Heart left ventricle (tissue), 16 donors: ENCODE measurements at regions of chr11 and their contacts with region 1.

Region 1: GRCh38 chr11:112961146-112961668 is at the start of gene NCAM1:
- DNase-seq: peak; percentile 82 to 92 (median 88)
- ATAC-seq: peak; percentile 71 to 84 (median 75)
- H3K4me3 ChIP-seq: peak within 1 kb of the TSS; percentile 55 to 93 (median 68)
- H3K27ac ChIP-seq: peak within 1 kb of the TSS; percentile 52 to 90 (median 81)
- H3K4me1 ChIP-seq: peaks cover 0 to 39% (median 9%) of the 10 kb centered on the region in 12 donors
- H3K27me3 ChIP-seq: peaks cover 0 to 71% (median 8%) of the 10 kb centered on the region in 9 donors
- CTCF ChIP-seq: no peak
- POLR2A ChIP-seq: no peak
- total RNA-seq, gene NCAM1: 190 to 753 (median 398) TPM

Region 2: DNA sequence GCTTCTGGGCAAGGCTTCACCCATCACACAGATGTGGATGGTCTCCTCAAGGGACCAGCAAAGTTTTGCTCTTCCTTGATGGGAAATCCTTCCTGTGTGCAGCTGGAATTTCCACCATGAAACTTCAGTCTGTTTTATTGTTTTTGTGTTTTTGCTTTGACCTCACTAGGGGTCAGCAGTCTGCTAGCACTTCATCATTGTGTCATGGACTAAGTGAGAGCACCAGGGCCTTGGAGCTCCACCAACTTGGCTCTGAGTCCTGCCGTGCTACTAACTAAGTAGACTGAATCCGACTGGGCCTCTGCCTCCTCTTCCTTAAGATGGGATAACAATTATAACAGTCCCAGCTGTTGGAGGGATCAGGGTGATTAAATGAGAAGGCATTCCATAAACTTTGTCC is 305.8 kb before region 1 on chr11:
- intact Hi-C with region 1: loop called in 3 of 10 experiments (anchors 5 to 10 kb)
- DNase-seq: peak; percentile 81 to 91 (median 87)
- ATAC-seq: peak; percentile 50 to 84 (median 78)
- H3K4me3 ChIP-seq: no peak overlapping the region
- H3K27ac ChIP-seq: peak overlapping the region in 8 of 12 donors; percentile 4 to 65 (median 40)
- H3K4me1 ChIP-seq: peaks cover 0 to 51% (median 21%) of the 10 kb centered on the region in 12 donors
- H3K27me3 ChIP-seq: no peaks in the 10 kb centered on the region
- CTCF ChIP-seq: peak in 4 of 12 donors; percentile 24 to 42 (median 28)
- POLR2A ChIP-seq: no peak

Region 3: DNA sequence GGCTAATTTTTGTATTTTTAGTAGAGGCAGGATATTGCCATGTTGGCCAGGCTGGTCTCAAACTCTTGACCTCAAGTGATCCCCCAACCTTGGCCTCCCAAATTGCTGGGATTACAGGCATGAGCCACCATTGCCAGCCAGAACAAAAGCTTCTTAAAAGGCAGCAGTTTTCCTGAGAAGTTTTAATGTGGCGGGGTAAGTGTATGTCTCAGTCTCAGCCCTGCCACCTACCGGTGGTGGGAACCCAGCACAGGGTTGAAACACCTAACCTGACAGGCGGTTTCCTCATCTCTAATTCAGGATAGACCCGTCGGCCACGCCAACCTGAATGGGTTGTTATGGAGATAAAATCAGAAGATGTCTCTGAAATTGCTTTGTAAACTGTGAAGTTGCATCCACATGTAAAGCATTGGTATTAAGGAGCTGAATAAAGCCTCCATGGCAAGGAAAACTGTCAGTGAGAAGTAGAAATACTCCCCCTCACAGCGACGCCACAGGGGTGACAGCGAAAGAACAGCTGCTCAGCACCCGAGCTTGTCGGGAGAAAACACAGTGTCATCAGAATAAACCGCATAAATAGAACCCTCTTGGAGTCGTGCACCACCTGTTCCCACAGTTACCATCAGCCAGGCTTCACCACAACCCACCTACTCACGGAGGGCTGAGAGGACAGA is 165.9 kb before region 1 on chr11:
- intact Hi-C with region 1: loop called in 1 of 10 experiments (anchors 5 kb)
- DNase-seq: no peak
- ATAC-seq: peak in 2 of 4 donors; percentile 47 to 50
- H3K4me3 ChIP-seq: no peak overlapping the region
- H3K27ac ChIP-seq: peak overlapping the region in 4 of 12 donors; percentile 19 to 42 (median 29)
- H3K4me1 ChIP-seq: peaks cover 0 to 39% (median 14%) of the 10 kb centered on the region in 12 donors
- H3K27me3 ChIP-seq: no peaks in the 10 kb centered on the region
- CTCF ChIP-seq: peak; percentile 21 to 63 (median 47)
- POLR2A ChIP-seq: no peak

Region 4: DNA sequence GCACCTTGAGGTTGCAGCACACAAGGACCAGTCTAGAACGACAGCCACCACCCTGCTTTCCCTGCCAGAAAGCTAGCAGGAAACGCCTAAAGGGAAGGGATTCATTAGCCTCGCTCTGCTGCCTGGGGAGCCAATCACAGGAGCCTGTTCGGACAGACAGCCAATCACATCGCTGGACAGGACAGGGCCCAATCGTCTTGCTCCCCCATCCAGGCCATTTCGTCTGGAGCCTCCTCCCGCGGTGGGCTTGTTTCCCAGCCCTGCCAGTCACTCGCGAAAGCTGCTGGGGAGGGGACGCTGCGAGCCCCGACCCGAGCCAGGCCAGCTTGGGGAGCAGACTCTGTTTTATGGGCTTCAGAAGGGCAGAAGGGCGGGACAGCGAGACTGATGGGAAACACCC is 79.7 kb before region 1 on chr11:
- intact Hi-C with region 1: loop called in 1 of 10 experiments (anchors 5 kb)
- DNase-seq: peak; percentile 77 to 90 (median 83)
- ATAC-seq: peak; percentile 87 to 96 (median 92)
- H3K4me3 ChIP-seq: peak overlapping the region in 11 of 12 donors; percentile 16 to 63 (median 44)
- H3K27ac ChIP-seq: peak overlapping the region in 11 of 12 donors; percentile 35 to 86 (median 71)
- H3K4me1 ChIP-seq: peaks cover 0 to 33% (median 8%) of the 10 kb centered on the region in 12 donors
- H3K27me3 ChIP-seq: no peaks in the 10 kb centered on the region
- CTCF ChIP-seq: no peak
- POLR2A ChIP-seq: peak in 1 of 2 donors; percentile 64

Region 5: DNA sequence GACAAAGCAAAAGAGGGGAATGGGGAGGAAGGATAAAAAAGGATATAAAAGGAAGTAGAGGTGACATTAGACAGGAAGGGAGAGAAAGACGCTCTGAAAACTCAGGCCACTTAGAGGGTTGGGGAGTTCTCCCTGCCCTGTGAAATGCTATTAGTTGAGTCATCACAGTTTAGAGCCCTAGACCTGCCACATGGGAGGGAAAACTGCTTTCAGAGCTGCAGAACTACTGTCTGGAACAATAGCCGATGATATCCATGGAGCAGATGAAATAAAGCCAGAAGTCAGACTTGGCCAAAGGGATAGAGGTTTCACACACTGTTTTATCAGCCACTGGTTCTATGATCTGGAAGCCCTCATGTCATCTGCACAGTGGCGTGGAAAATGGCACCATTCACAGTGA is 157.9 kb after region 1 on chr11:
- intact Hi-C with region 1: loop called in 7 of 10 experiments (anchors 5 to 10 kb)
- DNase-seq: peak in 1 of 5 donors; percentile 18
- ATAC-seq: peak; percentile 62 to 87 (median 68)
- H3K4me3 ChIP-seq: no peak overlapping the region
- H3K27ac ChIP-seq: peak overlapping the region in 8 of 12 donors; percentile 24 to 63 (median 36)
- H3K4me1 ChIP-seq: peaks cover 0 to 54% (median 20%) of the 10 kb centered on the region in 12 donors
- H3K27me3 ChIP-seq: no peaks in the 10 kb centered on the region
- CTCF ChIP-seq: no peak
- POLR2A ChIP-seq: no peak

Region 6: GRCh38 chr11:113274713-113275582 is 313.7 kb after region 1 on chr11:
- intact Hi-C with region 1: loop called in 2 of 10 experiments (anchors 10 kb)
- DNase-seq: no peak
- ATAC-seq: peak in 2 of 4 donors; percentile 8 to 44
- H3K4me3 ChIP-seq: no peak overlapping the region
- H3K27ac ChIP-seq: no peak overlapping the region
- H3K4me1 ChIP-seq: no peaks in the 10 kb centered on the region
- H3K27me3 ChIP-seq: no peaks in the 10 kb centered on the region
- CTCF ChIP-seq: peak in 5 of 12 donors; percentile 6 to 17 (median 13)
- POLR2A ChIP-seq: no peak